ENCODE measurements at regions of chr7 and their contacts with region 1.

Region 1: DNA sequence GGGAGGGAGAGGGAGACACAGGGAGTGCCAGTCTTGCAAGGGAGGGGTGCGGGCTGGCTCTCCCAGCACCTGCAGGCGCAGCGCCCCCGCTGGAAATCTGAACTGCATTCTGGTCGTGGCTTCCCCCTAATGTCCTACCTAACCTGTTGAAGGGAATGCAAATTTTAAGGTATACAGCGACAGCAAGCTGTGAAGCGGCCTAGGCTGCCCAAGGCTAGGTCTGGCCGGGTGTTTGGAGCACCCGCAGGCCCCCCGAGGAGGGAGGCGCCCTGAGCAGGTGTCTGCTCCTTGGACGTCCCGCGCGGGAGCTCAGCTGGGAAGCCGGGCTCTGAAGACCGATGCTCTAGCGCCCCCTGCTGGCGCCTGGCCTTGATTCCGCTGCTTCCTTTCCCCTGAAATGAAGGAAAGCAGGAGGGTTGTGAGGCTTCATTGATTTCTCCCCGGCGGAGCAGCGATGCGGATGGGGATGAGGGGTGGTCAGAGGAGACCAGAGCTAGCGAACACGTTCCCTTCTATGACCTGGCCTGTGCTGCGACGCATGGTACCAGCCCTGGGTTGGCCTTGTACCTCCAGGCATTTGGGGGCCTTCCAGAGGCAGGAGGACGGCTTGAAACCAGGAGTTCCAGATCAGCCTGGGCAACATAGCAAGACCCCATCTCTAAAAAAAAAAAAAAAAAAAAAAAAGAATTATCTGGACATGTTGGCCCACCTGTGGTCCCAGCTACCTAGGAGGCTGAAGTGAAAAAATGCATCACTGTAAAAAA is 601.3 kb downstream of the GALNT17 start:
- DNase-seq: peak; percentile 97
- ATAC-seq: peak; percentile 80
- H3K4me3 Mint-ChIP-seq: peak overlapping the region; percentile 61
- H3K27ac Mint-ChIP-seq: no peak overlapping the region
- H3K4me1 Mint-ChIP-seq: peaks cover 18% of the 10 kb centered on the region
- H3K27me3 Mint-ChIP-seq: no peaks in the 10 kb centered on the region
- CTCF ChIP-seq: peak; percentile 97

Region 2: GRCh38 chr7:70829221-70830059 is 903.8 kb before region 1 on chr7:
- CTCF ChIA-PET with region 1: interaction called, 28 read pairs
- POLR2A ChIA-PET with region 1: no interaction called
- DNase-seq: peak; percentile 91
- ATAC-seq: peak; percentile 89
- H3K4me3 Mint-ChIP-seq: peak overlapping the region; percentile 45
- H3K27ac Mint-ChIP-seq: 0 out of 2 replicates have a peak overlapping the region, but pooled peaks have one; percentile 51
- H3K4me1 Mint-ChIP-seq: peaks cover 16% of the 10 kb centered on the region
- H3K27me3 Mint-ChIP-seq: no peaks in the 10 kb centered on the region; the same call in none of the 2 replicates
- CTCF ChIP-seq: peak; percentile 97

Region 3: DNA sequence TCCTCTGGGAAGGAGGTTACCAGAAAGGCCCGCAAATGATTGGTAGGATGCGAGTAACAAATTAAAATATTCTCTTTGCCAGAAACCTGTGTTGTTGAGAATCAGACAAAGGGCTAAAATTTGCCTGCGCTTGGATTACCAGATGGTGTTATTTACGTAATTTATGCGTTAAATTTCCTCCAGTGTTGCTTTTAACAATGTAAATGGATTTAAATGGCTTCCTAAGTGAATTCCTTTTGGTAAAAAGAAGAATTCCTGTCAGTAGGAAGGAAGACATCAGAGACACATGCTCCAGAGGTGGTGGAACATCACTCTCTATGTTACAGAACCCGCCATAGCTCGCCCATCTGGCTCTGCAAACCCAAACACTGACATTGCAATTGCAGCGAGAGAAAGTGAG is 80.8 kb before region 1 on chr7:
- CTCF ChIA-PET with region 1: interaction called, 10 read pairs
- POLR2A ChIA-PET with region 1: no interaction called
- DNase-seq: no peak
- ATAC-seq: peak; percentile 45
- H3K4me3 Mint-ChIP-seq: peak overlapping the region; percentile 5
- H3K27ac Mint-ChIP-seq: peak overlapping the region; percentile 93
- H3K4me1 Mint-ChIP-seq: peaks cover 55% of the 10 kb centered on the region
- H3K27me3 Mint-ChIP-seq: no peaks in the 10 kb centered on the region
- CTCF ChIP-seq: no peak

Region 4: DNA sequence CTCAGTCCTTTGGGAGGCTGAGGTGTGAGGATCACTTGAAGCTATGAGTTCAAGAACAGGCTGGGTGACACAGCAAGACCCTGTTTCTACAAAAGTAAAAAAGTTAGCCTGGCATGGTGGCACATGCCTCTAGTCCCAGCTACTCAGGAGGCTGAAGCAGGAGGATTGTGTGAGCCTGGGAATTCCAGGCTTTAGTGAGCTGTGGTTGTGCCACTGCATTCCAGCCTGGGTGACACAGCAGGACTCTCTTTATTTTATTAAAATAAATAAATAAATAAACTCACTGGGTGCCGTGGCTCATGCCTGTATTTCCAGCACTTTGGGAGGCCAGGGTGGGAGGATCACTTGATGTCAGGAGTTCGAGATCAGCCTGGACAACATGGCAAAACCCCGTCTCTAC is 71.0 kb after region 1 on chr7:
- CTCF ChIA-PET with region 1: no interaction called
- POLR2A ChIA-PET with region 1: no interaction called
- DNase-seq: no peak
- ATAC-seq: no peak
- H3K4me3 Mint-ChIP-seq: no peak overlapping the region
- H3K27ac Mint-ChIP-seq: no peak overlapping the region
- H3K4me1 Mint-ChIP-seq: no peaks in the 10 kb centered on the region; the same call in 1 of the 2 replicates
- H3K27me3 Mint-ChIP-seq: peaks cover 5% of the 10 kb centered on the region; the same call in 1 of the 2 replicates
- CTCF ChIP-seq: no peak